Transverse colon (tissue), 4 donors: ENCODE measurements at regions of chr3 and their contacts with region 1.

Region 1: DNA sequence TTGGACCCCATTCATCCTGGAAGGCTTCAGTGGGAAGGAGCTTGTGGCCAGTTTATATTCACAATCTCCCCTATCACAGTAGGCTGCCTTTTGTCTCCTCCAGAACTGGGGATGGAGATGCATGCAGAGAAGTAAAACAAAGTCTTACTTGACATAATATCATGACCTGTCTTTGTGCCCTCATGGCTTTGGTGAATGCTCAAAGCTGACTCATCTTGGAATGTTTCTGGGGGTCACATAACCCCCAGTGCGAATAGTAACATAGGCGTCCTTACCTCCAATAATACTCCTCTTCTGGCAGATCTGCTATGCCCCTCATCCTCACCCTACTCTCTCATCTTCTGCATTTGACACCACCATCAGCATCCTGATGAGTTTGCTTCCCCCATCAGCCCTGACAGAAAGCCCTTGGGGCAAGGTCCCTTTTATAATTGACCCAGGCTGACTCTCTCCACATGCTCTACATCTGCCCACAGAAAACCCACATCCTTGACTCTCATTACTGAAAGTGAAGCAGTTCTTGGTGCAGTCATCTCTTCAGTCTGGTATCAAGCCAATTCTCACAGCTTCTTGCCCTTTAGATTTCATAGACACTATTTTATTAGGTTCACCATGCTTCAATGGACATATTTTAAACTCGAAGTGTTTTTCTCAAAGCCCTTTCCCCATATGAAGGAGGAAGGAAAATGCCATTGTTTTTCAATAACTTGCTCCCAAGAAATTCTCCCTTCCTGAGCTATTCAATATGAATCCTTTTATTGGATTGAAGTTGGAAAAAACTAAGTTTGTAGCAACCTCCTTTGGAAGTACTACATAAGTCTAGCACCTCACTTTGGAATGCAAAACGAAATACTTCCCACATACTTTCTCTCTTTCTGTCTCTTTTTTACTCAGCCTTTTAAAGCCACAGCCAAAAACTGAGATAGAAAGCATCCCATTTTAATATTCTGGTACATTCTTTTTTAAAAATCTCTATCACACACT is 36.6 kb downstream of the OSTN start:
- DNase-seq: no peak
- H3K4me3 ChIP-seq: no peak overlapping the region
- H3K27ac ChIP-seq: no peak overlapping the region
- H3K4me1 ChIP-seq: no peaks in the 10 kb centered on the region
- H3K27me3 ChIP-seq: no peaks in the 10 kb centered on the region
- CTCF ChIP-seq: no peak
- EP300 ChIP-seq: no peak
- POLR2A ChIP-seq: no peak

Region 2: DNA sequence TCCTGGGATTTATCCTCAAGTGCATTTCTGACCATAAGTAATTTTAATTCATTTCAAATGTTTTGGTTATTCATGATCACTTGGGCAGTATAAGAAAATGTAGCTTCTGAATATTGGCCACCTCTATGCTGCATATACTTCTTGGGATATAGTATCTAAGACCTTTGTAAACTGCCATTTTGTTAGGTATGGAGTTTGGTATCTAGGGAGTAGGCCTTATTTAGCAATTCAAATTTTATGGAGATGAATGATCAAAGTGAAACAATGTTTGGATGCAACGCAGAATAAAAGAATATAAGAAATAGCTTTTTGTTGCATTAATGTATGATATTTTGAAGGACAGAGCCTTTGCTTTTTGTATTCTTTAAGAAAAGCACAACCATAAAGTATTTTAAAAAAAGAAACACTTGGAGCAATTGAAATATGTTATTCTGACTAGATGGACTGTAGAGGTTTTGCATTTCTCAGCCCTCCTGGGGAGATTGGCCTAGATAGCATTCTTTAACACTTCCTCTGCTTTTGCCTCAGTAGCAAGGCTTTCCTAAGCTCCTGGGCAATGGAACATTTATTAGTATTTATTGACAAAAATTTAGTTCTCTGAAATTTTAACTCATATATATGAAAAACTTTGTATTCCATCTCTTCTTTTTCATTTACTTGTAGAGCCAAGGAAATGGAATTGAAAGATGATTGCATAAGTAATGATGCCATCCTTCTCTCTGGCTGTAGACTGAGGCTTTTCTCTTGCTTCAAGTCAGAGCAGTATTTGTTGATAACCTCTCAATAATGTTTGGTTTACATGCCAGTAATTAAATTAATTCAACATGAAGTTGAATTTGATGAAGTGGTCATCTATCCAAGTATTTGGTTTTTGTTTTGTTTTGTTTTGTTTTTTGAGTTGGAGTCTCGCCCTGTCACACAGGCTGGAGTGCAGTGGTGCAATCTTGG is 156.5 kb after region 1 on chr3:
- in situ Hi-C with region 1: loop called in 1 of 4 experiments (anchors 10 kb)
- intact Hi-C with region 1: no loop called
- DNase-seq: no peak
- H3K4me3 ChIP-seq: no peak overlapping the region
- H3K27ac ChIP-seq: no peak overlapping the region
- H3K4me1 ChIP-seq: no peaks in the 10 kb centered on the region
- H3K27me3 ChIP-seq: no peaks in the 10 kb centered on the region
- CTCF ChIP-seq: no peak
- EP300 ChIP-seq: no peak
- POLR2A ChIP-seq: no peak